AG04450 (cell line): ENCODE measurements at regions of chr16 and their contacts with region 1.

Region 1: GRCh38 chr16:2487903-2488531 is 13.1 kb downstream of the TBC1D24 start:
- DNase-seq: no peak
- H3K4me3 ChIP-seq: no peak overlapping the region
- H3K27ac ChIP-seq: no peak overlapping the region
- H3K27me3 ChIP-seq: no peaks in the 10 kb centered on the region
- CTCF ChIP-seq: no peak

Region 2: GRCh38 chr16:1762879-1763520 is 725.0 kb before region 1 on chr16:
- CTCF ChIA-PET with region 1: no interaction called
- POLR2A ChIA-PET with region 1: interaction called, 11 read pairs
- DNase-seq: no peak
- H3K4me3 ChIP-seq: no peak overlapping the region
- H3K27ac ChIP-seq: no peak overlapping the region
- H3K27me3 ChIP-seq: no peaks in the 10 kb centered on the region
- CTCF ChIP-seq: no peak

Region 3: GRCh38 chr16:2459647-2460390 is 28.2 kb before region 1 on chr16 and contains the start of gene TEDC2:
- CTCF ChIA-PET with region 1: no interaction called
- POLR2A ChIA-PET with region 1: no interaction called
- DNase-seq: peak; percentile 74
- H3K4me3 ChIP-seq: peak within 1 kb of the TSS; percentile 70
- H3K27ac ChIP-seq: peak within 1 kb of the TSS; percentile 2
- H3K27me3 ChIP-seq: no peaks in the 10 kb centered on the region
- CTCF ChIP-seq: no peak
- polyA plus RNA-seq, gene TEDC2: 1.8 TPM in 2 replicates

Region 4: GRCh38 chr16:2734844-2735515 is 247.0 kb after region 1 on chr16:
- CTCF ChIA-PET with region 1: no interaction called
- POLR2A ChIA-PET with region 1: no interaction called
- DNase-seq: no peak
- H3K4me3 ChIP-seq: no peak overlapping the region
- H3K27ac ChIP-seq: no peak overlapping the region
- H3K27me3 ChIP-seq: peaks cover 15% of the 10 kb centered on the region
- CTCF ChIP-seq: no peak

Region 5: GRCh38 chr16:3161136-3162018 is 673.4 kb after region 1 on chr16:
- CTCF ChIA-PET with region 1: no interaction called
- POLR2A ChIA-PET with region 1: no interaction called
- DNase-seq: no peak
- H3K4me3 ChIP-seq: no peak overlapping the region
- H3K27ac ChIP-seq: no peak overlapping the region
- H3K27me3 ChIP-seq: no peaks in the 10 kb centered on the region
- CTCF ChIP-seq: no peak